Caco-2 (cell line): ENCODE measurements at regions of chr1 and their contacts with region 1.

Region 1: DNA sequence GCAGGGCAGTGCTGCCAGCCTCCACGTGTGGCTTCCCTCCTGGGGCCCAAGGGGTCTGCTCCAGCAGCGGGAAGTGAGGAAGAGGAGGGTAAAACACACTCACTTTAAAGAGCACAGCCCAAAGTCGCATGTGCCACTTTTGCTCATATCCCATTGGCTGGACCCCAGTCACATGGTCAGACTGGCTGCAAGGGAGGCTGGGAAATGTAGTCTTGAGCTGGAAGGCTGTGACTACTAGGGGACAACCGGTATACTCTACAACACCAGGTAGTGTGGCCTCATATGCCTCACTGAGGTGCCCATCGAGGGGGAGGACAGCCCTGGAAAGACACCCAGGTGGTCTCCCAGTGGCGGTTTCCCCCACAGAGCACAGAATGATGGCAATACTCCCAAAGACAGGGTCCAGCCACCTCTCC is 45.2 kb downstream of the CAMK2N1 start:
- DNase-seq: peak; percentile 65 to 69
- H3K4me3 ChIP-seq: no peak overlapping the region
- H3K4me3 Mint-ChIP-seq: no peak overlapping the region
- H3K27ac Mint-ChIP-seq: no peak overlapping the region
- H3K4me1 ChIP-seq: peaks cover 7% of the 10 kb centered on the region; the same call in 1 of the 2 replicates
- H3K4me1 Mint-ChIP-seq: no peaks in the 10 kb centered on the region
- H3K27me3 ChIP-seq: no peaks in the 10 kb centered on the region
- H3K27me3 Mint-ChIP-seq: no peaks in the 10 kb centered on the region
- CTCF ChIP-seq: no peak

Region 2: GRCh38 chr1:20485527-20486456 is 45.0 kb after region 1 on chr1 and contains the start of gene CAMK2N1:
- CTCF ChIA-PET with region 1: interaction called, 4 read pairs
- POLR2A ChIA-PET with region 1: no interaction called
- intact Hi-C with region 1: loop called (anchors 2 kb)
- DNase-seq: peak; percentile 75
- H3K4me3 ChIP-seq: peak within 1 kb of the TSS; percentile 68
- H3K4me3 Mint-ChIP-seq: peak within 1 kb of the TSS; percentile 89
- H3K27ac Mint-ChIP-seq: peak within 1 kb of the TSS; percentile 95
- H3K4me1 ChIP-seq: peaks cover 20% of the 10 kb centered on the region
- H3K4me1 Mint-ChIP-seq: peaks cover 29% of the 10 kb centered on the region
- H3K27me3 ChIP-seq: no peaks in the 10 kb centered on the region
- H3K27me3 Mint-ChIP-seq: no peaks in the 10 kb centered on the region
- CTCF ChIP-seq: no peak
- total RNA-seq, gene CAMK2N1: 47.5 and 55.0 TPM in 2 replicates

Region 3: DNA sequence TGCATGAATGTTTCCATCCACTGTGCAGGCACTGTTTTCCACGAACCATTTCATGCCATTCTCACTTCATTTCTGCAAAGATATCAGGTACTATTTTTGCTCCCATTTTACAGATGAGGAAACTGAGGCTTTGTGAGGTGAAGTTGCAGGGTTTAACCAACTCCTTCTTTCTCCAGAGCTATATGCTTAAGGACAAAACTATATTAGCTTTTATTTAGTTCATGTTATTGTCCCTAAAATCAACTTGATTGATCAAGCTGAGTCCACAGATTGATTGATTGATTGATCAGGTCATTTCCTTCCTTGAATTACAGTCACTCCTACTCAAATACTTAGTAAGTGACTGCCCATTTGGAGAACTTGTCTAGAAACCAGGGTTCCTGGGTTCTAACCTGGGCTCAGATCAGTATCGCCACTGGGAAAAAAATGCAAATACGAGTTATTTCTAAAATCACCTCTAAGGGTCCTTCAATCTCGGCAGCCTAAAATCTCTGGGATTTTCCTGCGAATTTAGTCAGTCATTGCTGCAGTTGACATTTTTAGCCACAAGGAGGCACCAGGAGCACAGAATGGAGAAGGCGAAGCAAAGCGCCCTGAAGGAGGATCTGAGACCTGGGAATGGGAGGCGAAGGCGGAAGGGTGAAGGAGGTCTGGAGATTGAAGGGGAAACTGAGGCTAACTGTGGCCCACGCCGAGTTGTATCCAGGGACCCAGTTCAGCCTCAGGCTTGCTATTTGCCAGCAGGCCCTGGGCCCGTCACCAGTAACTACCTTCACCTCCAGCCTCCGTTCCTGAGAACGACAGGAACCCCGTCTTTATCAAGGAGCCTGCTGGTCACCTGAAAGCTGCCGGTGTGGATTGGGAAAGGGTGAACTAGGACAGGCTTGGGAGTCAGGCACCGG is 81.4 kb after region 1 on chr1:
- CTCF ChIA-PET with region 1: no interaction called
- POLR2A ChIA-PET with region 1: no interaction called
- intact Hi-C with region 1: no loop called
- DNase-seq: peak; percentile 74 to 84
- H3K4me3 ChIP-seq: no peak overlapping the region
- H3K4me3 Mint-ChIP-seq: no peak overlapping the region
- H3K27ac Mint-ChIP-seq: no peak overlapping the region
- H3K4me1 ChIP-seq: no peaks in the 10 kb centered on the region
- H3K4me1 Mint-ChIP-seq: no peaks in the 10 kb centered on the region
- H3K27me3 ChIP-seq: no peaks in the 10 kb centered on the region
- H3K27me3 Mint-ChIP-seq: no peaks in the 10 kb centered on the region
- CTCF ChIP-seq: peak; percentile 80 to 82